ENCODE measurements at regions of chr12 and their contacts with region 1.

Region 1: GRCh38 chr12:13941258-13942249 is 39.8 kb downstream of the GRIN2B start:
- DNase-seq: peak; percentile 18
- ATAC-seq: no peak
- H3K4me3 ChIP-seq: no peak overlapping the region
- H3K27ac ChIP-seq: no peak overlapping the region
- H3K4me1 ChIP-seq: no peaks in the 10 kb centered on the region
- H3K27me3 ChIP-seq: no peaks in the 10 kb centered on the region
- CTCF ChIP-seq: peak; percentile 54

Region 2: GRCh38 chr12:13278249-13278787 is 663.2 kb before region 1 on chr12:
- CTCF ChIA-PET with region 1: no interaction called
- POLR2A ChIA-PET with region 1: no interaction called
- in situ Hi-C with region 1: no loop called
- intact Hi-C with region 1: loop called (anchors 10 kb)
- DNase-seq: no peak
- ATAC-seq: peak; percentile 97
- H3K4me3 ChIP-seq: peak overlapping the region in 1 of 2 experiments; percentile 23; a peak in 1 of 4 replicates
- H3K27ac ChIP-seq: no peak overlapping the region
- H3K4me1 ChIP-seq: peaks cover 3% of the 10 kb centered on the region; the same call in 1 of the 2 replicates
- H3K27me3 ChIP-seq: peaks cover 3% of the 10 kb centered on the region; the same call in 1 of the 2 replicates
- CTCF ChIP-seq: peak; percentile 96

Region 3: GRCh38 chr12:13740150-13740547 is 201.4 kb before region 1 on chr12:
- CTCF ChIA-PET with region 1: no interaction called
- POLR2A ChIA-PET with region 1: no interaction called
- in situ Hi-C with region 1: no loop called
- intact Hi-C with region 1: no loop called
- DNase-seq: no peak
- ATAC-seq: no peak
- H3K4me3 ChIP-seq: no peak overlapping the region
- H3K27ac ChIP-seq: no peak overlapping the region
- H3K4me1 ChIP-seq: no peaks in the 10 kb centered on the region
- H3K27me3 ChIP-seq: peaks cover 2% of the 10 kb centered on the region
- CTCF ChIP-seq: no peak

Region 4: GRCh38 chr12:13834241-13834640 is 107.3 kb before region 1 on chr12:
- CTCF ChIA-PET with region 1: no interaction called
- POLR2A ChIA-PET with region 1: no interaction called
- in situ Hi-C with region 1: no loop called
- intact Hi-C with region 1: no loop called
- DNase-seq: no peak
- ATAC-seq: no peak
- H3K4me3 ChIP-seq: no peak overlapping the region
- H3K27ac ChIP-seq: no peak overlapping the region
- H3K4me1 ChIP-seq: no peaks in the 10 kb centered on the region
- H3K27me3 ChIP-seq: no peaks in the 10 kb centered on the region
- CTCF ChIP-seq: no peak

Region 5: GRCh38 chr12:13864081-13864673 is 77.4 kb before region 1 on chr12:
- CTCF ChIA-PET with region 1: no interaction called
- POLR2A ChIA-PET with region 1: no interaction called
- in situ Hi-C with region 1: no loop called
- intact Hi-C with region 1: loop called (anchors 5 kb)
- DNase-seq: peak; percentile 55
- ATAC-seq: peak; percentile 88
- H3K4me3 ChIP-seq: no peak overlapping the region
- H3K27ac ChIP-seq: no peak overlapping the region
- H3K4me1 ChIP-seq: no peaks in the 10 kb centered on the region
- H3K27me3 ChIP-seq: no peaks in the 10 kb centered on the region; the same call in 1 of the 2 replicates
- CTCF ChIP-seq: peak; percentile 87

Region 6: DNA sequence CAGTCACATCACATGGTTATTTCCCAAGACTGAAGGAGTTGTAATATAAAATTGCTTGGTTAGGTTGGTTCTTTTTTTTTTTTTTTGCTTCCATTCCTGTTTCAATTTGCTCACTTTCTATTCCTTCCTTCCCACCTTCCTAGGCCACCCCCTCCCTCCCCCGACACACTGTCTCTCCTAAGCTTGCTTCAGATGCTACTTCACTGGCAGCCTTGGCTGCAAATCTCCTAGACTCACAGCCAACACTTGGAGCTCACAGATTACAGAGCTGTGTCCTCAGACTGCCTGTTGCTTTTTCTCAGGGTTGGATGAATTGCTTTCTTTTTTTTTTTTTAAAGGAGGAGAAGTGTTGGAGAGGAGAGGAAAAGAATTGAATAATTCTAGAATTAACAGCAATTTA is 117.2 kb after region 1 on chr12:
- CTCF ChIA-PET with region 1: no interaction called
- POLR2A ChIA-PET with region 1: no interaction called
- in situ Hi-C with region 1: no loop called
- intact Hi-C with region 1: no loop called
- DNase-seq: no peak
- ATAC-seq: no peak
- H3K4me3 ChIP-seq: no peak overlapping the region
- H3K27ac ChIP-seq: no peak overlapping the region
- H3K4me1 ChIP-seq: no peaks in the 10 kb centered on the region
- H3K27me3 ChIP-seq: no peaks in the 10 kb centered on the region
- CTCF ChIP-seq: no peak